Endothelial cell of umbilical vein (primary cell): ENCODE measurements at regions of chr7 and their contacts with region 1.

Region 1: DNA sequence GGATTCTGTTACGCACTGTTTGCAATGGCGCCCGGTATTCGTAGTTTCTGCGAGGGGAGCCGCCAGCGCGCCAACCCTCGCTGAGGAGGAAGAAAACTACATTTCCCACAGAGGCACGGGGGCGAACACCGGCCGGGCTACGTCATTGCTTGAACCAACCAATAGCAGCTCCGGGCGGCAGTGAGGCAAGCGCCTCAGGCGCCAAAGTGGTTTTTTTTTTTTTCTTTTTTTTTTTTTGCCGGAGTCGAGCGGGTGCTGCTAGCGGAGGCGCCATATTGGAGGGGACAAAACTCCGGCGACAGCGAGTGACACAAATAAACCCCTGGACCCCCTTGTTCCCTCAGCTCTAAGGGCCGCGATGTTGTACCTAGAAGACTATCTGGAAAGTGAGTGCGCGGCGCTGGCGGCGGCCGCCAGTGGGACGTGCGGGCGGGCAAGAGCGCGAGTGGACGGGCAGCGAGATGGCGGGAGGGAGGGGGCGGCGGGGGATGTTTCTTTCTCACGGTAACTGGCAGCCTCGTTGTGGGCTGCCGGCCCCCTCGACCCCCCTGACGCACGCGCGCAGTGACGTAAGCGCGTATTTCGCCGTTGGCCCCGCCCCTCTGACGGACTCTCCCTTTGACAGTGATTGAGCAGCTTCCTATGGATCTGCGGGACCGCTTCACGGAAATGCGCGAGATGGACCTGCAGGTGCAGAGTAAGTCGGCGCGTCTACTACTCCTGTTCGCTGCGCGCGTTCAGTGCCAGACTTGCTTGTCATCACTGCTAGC is at the start of gene ING3:
- DNase-seq: peak; percentile 98
- H3K4me3 ChIP-seq: peak within 1 kb of the TSS; percentile 57 to 100 (median 98)
- H3K27ac ChIP-seq: peak within 1 kb of the TSS; percentile 96
- H3K4me1 ChIP-seq: peaks cover 18% of the 10 kb centered on the region
- H3K27me3 ChIP-seq: no peaks in the 10 kb centered on the region
- CTCF ChIP-seq: no peak
- POLR2A ChIP-seq: peak; percentile 82
- total RNA-seq, gene ING3: 19.4 and 19.6 TPM in 2 replicates

Region 2: DNA sequence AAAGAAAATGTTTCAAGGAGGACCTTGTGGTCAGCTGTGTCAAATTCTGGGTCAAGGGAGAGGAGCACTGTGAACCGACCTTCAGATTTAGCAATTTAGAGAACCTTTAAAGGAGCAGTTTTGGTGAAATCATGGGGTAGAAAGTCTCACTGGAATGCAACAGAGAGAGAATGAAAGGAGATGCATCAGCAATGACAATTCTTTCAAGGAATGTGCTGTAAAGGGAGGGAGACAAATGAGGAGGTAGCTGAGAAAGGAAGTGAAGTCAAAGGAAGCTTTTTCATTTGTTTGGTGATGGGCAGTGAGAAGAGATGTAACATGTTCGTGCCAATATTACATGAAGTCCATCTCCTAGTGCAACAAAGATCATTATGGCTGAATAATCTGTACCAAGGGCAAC is 258.8 kb before region 1 on chr7:
- CTCF ChIA-PET with region 1: no interaction called
- POLR2A ChIA-PET with region 1: no interaction called
- dilution Hi-C with region 1: no loop called
- intact Hi-C with region 1: no loop called
- DNase-seq: no peak
- H3K4me3 ChIP-seq: no peak overlapping the region
- H3K27ac ChIP-seq: no peak overlapping the region
- H3K4me1 ChIP-seq: no peaks in the 10 kb centered on the region
- H3K27me3 ChIP-seq: no peaks in the 10 kb centered on the region
- CTCF ChIP-seq: no peak
- POLR2A ChIP-seq: no peak

Region 3: DNA sequence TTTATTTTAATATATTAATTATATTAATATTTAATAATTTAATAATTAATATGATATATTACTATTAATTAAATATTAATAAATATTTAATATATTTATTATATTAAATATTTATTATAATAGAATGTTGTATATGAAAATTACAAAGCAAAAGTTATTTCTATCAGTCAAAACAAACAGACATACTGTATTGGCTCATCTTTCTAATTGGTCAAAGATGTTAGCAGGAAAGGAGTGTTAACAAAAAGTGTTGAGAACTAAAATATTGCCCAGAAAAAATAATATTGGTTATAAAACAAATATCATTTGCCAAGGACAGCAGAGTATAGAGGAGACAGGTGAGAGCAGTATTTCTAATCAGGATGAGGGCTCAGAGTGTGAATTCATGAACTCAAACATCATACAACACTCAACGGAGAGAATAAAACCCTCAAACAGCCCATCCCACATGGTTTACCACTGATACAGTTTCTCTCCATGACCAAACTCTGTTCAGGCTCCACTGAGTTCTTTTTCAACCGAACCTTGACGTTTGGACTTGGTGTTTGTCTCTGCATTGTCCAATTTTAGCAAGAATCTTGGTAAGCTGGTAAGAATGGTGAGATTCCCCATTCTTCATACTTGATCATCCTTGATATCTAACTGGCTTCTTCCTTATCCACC is 150.8 kb before region 1 on chr7:
- CTCF ChIA-PET with region 1: no interaction called
- POLR2A ChIA-PET with region 1: no interaction called
- dilution Hi-C with region 1: no loop called
- intact Hi-C with region 1: no loop called
- DNase-seq: no peak
- H3K4me3 ChIP-seq: no peak overlapping the region
- H3K27ac ChIP-seq: no peak overlapping the region
- H3K4me1 ChIP-seq: peaks cover 6% of the 10 kb centered on the region
- H3K27me3 ChIP-seq: no peaks in the 10 kb centered on the region
- CTCF ChIP-seq: no peak
- POLR2A ChIP-seq: no peak

Region 4: GRCh38 chr7:120931243-120931642 is 19.5 kb before region 1 on chr7:
- CTCF ChIA-PET with region 1: interaction called, 3 read pairs
- POLR2A ChIA-PET with region 1: no interaction called
- dilution Hi-C with region 1: no loop called
- intact Hi-C with region 1: loop called (anchors 2 kb)
- DNase-seq: peak; percentile 76
- H3K4me3 ChIP-seq: no peak overlapping the region
- H3K27ac ChIP-seq: peak overlapping the region; percentile 52
- H3K4me1 ChIP-seq: peaks cover 36% of the 10 kb centered on the region
- H3K27me3 ChIP-seq: no peaks in the 10 kb centered on the region
- CTCF ChIP-seq: no peak
- POLR2A ChIP-seq: no peak

Region 5: GRCh38 chr7:121020652-121021051 is 69.9 kb after region 1 on chr7:
- CTCF ChIA-PET with region 1: no interaction called
- POLR2A ChIA-PET with region 1: no interaction called
- dilution Hi-C with region 1: no loop called
- intact Hi-C with region 1: loop called (anchors 2 kb)
- DNase-seq: peak; percentile 85
- H3K4me3 ChIP-seq: no peak overlapping the region
- H3K27ac ChIP-seq: peak overlapping the region; percentile 50
- H3K4me1 ChIP-seq: peaks cover 23% of the 10 kb centered on the region
- H3K27me3 ChIP-seq: no peaks in the 10 kb centered on the region
- CTCF ChIP-seq: no peak
- POLR2A ChIP-seq: no peak